MCF 10A (cell line): ENCODE measurements at regions of chr3 and their contacts with region 1.

Region 1: GRCh38 chr3:31132132-31132769 is 237.8 kb upstream of the GADL1 start:
- DNase-seq: peak; percentile 65
- H3K4me3 Mint-ChIP-seq: no peak overlapping the region
- H3K27ac Mint-ChIP-seq: no peak overlapping the region
- H3K4me1 Mint-ChIP-seq: no peaks in the 10 kb centered on the region
- H3K27me3 Mint-ChIP-seq: no peaks in the 10 kb centered on the region
- CTCF ChIP-seq: peak; percentile 77

Region 2: DNA sequence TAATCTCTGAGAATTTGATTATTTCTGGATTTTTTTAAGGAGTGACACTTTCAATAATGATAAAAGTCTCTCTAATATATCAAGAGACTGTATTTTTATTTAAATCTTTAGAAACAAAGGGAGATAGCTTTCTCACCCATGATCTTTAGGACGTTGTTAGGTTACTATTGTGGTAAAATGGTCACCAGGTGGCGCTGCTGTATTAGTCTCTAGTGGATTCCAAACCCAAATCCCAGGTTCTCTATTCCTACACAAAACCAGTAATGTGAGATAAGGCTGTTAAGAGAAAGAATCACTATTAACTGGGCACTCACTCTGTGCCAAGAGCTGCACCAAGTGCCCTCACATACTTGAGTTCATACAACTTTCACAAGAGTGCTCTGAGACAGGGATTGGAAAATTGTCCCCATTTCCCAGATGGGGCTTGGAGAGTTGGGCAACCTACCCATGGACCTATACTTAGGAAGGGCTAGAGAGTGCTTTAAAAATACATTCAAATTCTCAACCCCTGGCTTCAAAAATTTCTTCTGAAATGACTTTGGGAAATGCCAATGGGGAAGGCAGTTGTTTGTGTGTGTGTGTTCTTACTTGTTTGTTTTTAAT is 1119.2 kb before region 1 on chr3:
- CTCF ChIA-PET with region 1: interaction called, 3 read pairs
- POLR2A ChIA-PET with region 1: no interaction called
- intact Hi-C with region 1: loop called (anchors 5 kb)
- DNase-seq: peak; percentile 82
- H3K4me3 Mint-ChIP-seq: no peak overlapping the region
- H3K27ac Mint-ChIP-seq: no peak overlapping the region
- H3K4me1 Mint-ChIP-seq: no peaks in the 10 kb centered on the region
- H3K27me3 Mint-ChIP-seq: no peaks in the 10 kb centered on the region
- CTCF ChIP-seq: peak; percentile 53

Region 3: DNA sequence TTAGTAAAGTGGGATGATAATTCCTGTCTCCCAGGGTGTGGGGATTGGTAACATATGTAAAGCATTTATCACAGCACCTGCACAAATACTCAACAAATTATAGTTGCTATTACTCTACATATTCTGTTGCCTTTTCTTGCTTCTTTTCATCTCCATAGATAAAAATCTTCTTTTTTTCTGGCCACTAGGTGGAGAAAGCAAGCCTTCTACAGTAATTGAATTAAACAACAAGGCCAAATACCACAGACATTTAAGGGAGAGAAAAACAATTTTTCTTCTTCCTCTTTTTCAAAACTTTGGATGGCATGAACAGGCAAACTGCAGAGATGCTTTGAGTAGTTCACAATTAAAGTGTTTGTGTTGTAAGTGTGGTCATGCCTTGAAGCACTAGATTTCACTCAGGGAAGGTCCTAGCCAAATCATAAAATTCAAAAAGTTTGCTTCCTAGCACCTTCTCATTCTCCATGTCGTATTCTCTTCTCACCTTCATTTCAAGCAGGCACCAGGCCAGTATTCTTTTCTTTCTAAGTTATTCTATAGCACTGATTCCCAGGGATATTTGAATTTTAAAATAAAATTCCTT is 1019.3 kb before region 1 on chr3:
- CTCF ChIA-PET with region 1: no interaction called
- POLR2A ChIA-PET with region 1: no interaction called
- intact Hi-C with region 1: loop called (anchors 5 kb)
- DNase-seq: peak; percentile 46
- H3K4me3 Mint-ChIP-seq: no peak overlapping the region
- H3K27ac Mint-ChIP-seq: no peak overlapping the region
- H3K4me1 Mint-ChIP-seq: peaks cover 16% of the 10 kb centered on the region
- H3K27me3 Mint-ChIP-seq: no peaks in the 10 kb centered on the region
- CTCF ChIP-seq: peak; percentile 66

Region 4: DNA sequence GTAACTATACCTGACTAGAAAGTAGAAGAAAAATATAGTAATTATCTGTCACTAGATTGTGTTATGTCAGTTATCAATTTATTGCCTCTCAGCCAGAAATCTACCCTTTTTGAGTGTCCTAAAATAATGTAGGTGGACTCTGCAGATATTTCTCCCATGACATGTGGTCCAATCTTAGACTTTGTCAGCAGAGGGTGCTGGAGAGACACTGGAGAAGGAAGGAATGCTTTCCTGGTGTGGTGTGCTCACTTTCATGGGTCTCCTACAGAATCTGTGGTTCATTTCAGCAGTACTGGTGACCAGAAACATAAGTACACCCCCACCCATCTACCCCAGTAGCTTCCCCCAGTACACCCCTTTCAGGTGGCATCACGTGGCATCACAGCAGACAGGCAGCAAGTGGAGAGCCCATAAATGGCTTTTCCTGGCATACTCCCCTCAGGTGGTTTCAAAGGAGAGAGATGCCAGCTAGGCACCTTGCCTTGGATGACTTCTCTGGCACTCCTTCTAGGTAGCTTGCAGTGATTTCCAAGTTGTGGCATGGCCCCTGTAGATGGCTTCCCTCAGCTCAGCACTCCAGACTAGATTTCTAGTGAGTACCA is 352.5 kb before region 1 on chr3:
- CTCF ChIA-PET with region 1: interaction called, 5 read pairs
- POLR2A ChIA-PET with region 1: no interaction called
- intact Hi-C with region 1: loop called (anchors 1 kb)
- DNase-seq: peak; percentile 65
- H3K4me3 Mint-ChIP-seq: no peak overlapping the region
- H3K27ac Mint-ChIP-seq: no peak overlapping the region
- H3K4me1 Mint-ChIP-seq: no peaks in the 10 kb centered on the region
- H3K27me3 Mint-ChIP-seq: no peaks in the 10 kb centered on the region
- CTCF ChIP-seq: peak; percentile 51

Region 5: DNA sequence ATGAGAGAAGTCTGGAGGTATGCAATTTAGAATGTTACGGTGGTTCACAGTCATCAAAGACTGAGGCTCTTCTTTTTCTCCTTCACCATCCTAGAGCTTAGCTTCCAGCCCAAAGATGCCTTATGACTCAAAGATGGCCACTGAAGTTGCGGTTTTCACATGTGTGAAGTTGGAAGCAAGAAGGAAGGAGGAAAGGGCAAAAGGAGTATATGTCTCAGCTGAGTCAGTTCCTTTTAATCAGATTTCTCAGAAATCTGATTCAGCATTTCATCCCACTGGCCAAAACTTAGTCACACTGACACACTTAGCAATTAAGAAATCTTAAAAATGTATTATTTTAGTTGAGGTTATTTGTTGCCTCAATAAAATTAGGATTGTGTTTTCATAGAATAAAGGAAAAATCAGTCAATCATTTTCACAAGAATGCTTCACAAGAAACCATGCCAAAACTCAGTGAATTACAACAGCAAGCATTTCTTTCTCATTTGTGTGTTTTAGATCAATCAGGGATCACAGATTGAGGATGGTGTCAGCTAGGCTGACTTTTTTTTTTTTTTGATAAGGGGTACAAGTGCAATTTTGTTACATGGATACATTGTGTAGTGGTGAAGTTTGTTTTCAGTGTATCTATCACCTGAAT is 26.7 kb before region 1 on chr3:
- CTCF ChIA-PET with region 1: interaction called, 3 read pairs
- POLR2A ChIA-PET with region 1: interaction called, 11 read pairs
- intact Hi-C with region 1: no loop called
- DNase-seq: peak; percentile 96
- H3K4me3 Mint-ChIP-seq: peak overlapping the region; percentile 54
- H3K27ac Mint-ChIP-seq: peak overlapping the region; percentile 72
- H3K4me1 Mint-ChIP-seq: peaks cover 52% of the 10 kb centered on the region
- H3K27me3 Mint-ChIP-seq: no peaks in the 10 kb centered on the region
- CTCF ChIP-seq: no peak

Region 6: DNA sequence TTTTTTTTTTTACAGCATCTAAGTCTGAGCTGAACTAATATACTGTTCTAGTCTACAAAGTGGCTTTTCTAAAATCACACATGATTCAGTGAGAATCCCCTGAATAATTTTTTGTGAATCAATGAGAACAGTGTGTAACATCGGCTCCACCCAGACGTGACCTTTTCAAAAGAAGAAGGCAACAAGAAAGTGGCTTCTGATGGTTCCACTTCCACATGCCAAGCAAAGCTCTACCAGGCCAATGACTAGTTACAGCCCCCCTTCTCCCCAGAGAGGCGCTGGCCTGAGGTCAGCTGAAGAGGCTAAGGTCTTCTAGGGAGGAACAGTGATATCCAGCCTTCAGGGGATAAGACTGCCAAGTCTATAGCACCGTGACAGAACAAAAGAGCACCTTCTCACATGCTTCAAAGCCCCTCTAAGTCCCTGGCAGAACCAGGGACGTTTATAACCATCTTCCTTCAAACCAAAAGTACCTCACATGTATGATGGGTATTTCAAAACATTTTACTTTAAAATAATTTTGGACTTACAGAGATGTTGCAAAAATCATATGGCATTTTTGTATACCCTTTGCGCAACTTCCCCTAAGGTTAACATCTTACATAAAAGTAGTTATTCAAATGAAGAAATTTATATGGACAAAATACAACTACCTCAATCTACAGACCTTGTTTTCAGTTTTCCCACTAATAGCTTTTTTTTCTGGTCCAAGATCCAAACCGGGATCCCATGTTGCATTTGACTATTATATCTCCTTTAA is 670.9 kb after region 1 on chr3:
- CTCF ChIA-PET with region 1: no interaction called
- POLR2A ChIA-PET with region 1: no interaction called
- intact Hi-C with region 1: no loop called
- DNase-seq: peak; percentile 9
- H3K4me3 Mint-ChIP-seq: no peak overlapping the region
- H3K27ac Mint-ChIP-seq: peak overlapping the region; percentile 51
- H3K4me1 Mint-ChIP-seq: peaks cover 24% of the 10 kb centered on the region
- H3K27me3 Mint-ChIP-seq: no peaks in the 10 kb centered on the region
- CTCF ChIP-seq: no peak